GM10248 (cell line): ENCODE measurements at regions of chr2 and their contacts with region 1.

Region 1: GRCh38 chr2:222690564-222691200 is 19.2 kb downstream of the MOGAT1 start:
- DNase-seq: peak; percentile 89
- CTCF ChIP-seq: peak; percentile 99

Region 2: DNA sequence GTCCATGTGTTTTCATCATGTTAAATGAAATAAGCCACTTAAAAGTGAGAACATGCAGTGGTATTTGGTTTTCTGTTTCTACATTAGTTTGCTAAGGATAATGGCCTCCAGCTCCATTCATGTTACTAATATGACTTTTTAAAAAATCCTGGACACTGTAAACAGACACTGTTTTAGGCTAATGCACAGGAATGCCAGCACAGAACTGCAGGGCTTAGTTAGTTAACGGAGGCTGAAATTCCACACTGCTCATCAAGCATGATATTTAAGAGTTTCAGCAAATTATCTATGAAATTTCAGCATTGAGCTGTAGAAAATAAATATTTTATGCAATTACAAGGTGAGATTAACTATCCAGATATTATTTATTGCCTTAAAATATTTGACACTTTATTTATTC is 349.4 kb before region 1 on chr2:
- CTCF ChIA-PET with region 1: no interaction called
- POLR2A ChIA-PET with region 1: no interaction called
- DNase-seq: no peak
- CTCF ChIP-seq: no peak

Region 3: DNA sequence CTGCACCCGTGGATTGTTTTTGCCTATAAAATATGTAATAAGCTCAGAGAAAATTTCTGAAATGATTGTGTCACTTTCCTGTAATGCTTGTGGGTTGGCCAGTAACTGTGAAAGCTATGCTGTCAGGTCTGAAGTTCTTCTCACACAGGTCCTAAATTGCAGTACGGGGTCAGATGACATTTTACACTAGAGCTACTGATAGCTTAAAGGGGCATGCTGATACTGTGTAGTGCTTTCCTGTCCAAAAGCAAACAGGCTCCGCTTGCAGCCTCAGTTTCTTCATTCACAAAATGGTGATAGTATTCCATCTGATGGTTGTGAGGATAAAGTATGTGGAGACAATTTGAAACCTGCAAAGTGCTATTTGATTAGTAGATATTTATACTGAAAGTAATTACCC is 27.2 kb before region 1 on chr2:
- CTCF ChIA-PET with region 1: interaction called, 10 read pairs
- POLR2A ChIA-PET with region 1: no interaction called
- DNase-seq: no peak
- CTCF ChIP-seq: no peak

Region 4: GRCh38 chr2:222707689-222708525 is 17.2 kb after region 1 on chr2:
- CTCF ChIA-PET with region 1: interaction called, 165 read pairs
- POLR2A ChIA-PET with region 1: no interaction called
- DNase-seq: peak; percentile 44
- CTCF ChIP-seq: peak; percentile 92

Region 5: DNA sequence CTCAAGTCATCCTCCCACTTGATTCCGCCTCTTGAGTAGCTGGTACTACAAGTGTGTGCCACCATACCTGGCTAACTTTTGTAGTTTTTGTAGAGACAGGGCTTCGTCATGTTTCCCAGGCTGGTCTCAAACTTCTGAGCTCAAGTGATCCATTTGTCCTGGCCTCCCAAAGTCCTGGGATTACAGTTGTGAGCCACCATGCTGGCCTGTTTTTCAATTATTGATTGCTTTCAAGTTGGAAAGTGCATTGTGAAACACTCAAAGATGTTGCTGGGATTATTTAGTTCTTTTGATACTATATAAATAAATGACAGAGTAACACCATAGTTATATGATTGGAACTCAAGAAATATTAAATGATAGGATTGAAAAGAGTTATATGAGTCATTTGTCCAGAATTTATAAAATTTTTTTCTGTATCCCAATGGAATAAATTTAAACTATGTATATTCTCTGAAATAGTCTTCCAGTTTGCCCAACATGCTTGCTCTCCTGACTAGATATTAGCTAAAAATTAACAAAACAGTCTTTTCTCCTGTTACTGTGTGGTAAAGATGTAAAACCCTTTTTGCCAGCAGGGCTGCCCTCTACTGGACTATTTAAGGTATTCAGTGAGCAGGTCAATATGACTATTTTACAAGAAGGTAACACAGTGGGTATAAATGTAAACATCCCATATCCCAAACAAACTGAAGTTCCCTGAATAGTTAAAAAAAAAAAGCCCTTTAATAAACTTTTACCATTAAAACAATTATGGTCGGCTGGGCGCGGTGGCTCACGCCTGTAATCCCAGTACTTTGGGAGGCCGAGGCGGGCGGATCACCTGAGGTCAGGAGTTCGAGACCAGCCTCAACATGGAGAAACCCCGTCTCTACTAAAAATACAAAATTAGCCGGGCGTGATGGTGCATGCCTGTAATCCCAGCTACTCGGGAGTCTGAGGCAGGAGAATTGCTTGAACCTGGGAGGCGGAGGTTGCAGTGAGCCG is 212.8 kb after region 1 on chr2:
- CTCF ChIA-PET with region 1: interaction called, 33 read pairs
- POLR2A ChIA-PET with region 1: interaction called, 3 read pairs
- DNase-seq: peak; percentile 66
- CTCF ChIP-seq: peak; percentile 64

Region 6: DNA sequence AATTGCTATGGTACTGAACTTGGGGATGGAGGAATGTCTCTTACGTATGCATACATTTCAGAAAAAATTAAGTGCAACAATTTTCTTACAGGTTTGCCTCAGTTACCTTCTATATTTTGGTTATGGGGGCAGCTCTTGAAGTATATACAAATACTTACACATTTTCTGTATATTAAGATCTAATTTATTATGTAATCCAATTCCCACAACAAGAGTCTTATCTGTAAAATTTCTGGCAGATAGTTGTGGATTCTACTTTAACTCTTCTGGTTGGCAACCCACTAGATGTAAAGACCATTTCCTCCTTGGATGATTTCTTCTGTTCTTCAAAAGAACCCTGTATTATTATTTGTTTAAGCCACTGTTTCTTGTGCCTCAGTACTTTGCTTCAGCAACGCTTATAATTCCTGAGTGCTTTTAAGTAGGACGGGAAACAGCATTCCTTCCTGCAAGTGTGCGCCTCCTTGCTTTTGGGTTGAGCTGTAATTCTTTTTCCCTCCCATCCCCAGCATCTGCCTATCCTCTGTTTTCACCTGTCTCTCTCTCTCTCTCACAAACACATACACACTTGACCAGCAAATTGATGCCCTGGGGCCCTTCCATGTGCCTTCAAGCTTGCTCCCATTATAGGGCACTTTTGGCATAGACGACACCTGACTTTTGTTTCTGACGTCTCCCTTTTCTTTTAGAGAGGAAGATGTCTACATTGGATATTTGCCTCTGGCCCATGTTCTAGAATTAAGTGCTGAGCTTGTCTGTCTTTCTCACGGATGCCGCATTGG is 231.5 kb after region 1 on chr2:
- CTCF ChIA-PET with region 1: interaction called, 10 read pairs
- POLR2A ChIA-PET with region 1: no interaction called
- DNase-seq: no peak
- CTCF ChIP-seq: no peak